GM13977 (cell line): ENCODE measurements at regions of chr2 and their contacts with region 1.

Region 1: GRCh38 chr2:13006829-13007717 is 290.3 kb downstream of the TRIB2 start:
- DNase-seq: peak; percentile 39
- CTCF ChIP-seq: peak; percentile 68

Region 2: DNA sequence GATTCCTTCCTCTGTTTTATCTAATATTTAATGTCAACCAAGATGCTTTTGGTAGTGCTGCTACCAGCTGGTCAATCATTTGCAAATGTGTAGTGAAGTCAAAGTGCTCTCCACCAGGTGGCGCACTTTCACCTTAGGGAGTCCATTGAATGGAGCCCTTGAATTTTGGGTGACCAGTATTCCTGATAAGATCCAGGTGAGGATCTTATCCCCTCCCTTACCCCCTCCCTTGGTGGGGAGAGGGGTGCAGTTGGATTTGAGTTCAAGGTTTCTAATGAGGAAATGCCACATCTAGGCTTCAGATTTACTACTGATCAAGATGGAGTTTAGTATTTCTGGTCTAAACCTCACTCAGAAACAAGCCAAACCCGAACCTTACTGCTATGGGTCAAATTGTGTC is 1529.1 kb before region 1 on chr2:
- in situ Hi-C with region 1: loop called (anchors 25 kb)
- DNase-seq: peak; percentile 72
- CTCF ChIP-seq: peak; percentile 86

Region 3: GRCh38 chr2:11688222-11689069 is 1318.6 kb before region 1 on chr2:
- in situ Hi-C with region 1: loop called (anchors 25 kb)
- DNase-seq: peak; percentile 83
- CTCF ChIP-seq: peak; percentile 81

Region 4: DNA sequence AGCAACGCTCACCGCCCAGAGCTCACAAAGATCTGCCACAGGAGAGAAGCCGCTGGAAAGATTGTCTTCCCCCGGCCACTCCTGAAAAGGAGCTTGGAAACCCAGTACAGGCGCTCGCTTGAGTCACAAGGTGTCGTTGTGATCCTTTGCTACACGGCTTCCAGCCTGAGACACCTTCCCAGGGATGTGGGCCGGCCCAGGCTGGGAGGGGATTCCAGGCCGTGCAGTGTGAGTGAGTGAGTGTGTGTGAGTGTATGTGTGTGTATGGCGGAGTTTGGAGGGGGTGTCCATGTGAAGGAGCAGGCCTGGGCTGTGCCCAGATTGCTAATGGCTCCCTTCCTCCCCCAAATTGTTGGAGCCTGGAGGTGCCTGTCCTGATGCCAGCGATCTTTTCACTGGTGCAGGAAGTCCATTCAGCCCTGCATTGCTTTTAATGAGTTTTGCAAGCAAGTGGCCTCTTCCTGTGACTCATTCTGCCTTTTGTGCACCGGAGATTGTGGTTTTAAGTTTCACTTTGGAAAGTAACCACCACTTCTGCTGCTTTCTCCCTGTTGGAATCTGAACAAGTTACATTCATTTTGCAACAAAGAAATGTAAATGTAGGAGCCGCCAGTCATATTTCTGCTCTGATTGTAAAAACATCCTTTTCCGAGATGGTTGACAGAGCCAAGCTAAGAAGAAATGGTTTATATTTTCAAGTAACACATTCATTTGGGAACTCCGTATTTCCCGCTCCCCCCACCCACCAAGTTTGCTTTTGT is 1176.9 kb before region 1 on chr2:
- in situ Hi-C with region 1: loop called (anchors 25 kb)
- DNase-seq: peak; percentile 74
- CTCF ChIP-seq: peak; percentile 19

Region 5: DNA sequence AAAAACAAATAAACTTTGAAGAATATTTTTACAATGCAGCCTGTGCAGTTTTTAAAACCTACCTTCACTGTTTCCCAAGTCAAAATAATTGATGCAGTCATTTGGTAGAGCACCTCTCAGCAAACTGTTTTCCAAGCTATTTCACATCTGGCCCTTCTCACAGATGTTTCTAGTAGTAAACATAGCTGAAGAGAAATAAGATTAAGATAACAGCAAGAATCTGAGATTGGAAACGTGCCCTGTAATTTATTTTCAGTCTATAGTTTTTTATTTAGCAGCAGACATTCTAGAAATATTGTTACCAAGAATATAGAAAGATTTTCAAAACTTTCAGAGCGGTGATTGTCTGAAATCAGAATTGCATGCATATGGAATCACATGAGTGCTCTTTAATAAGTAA is 149.8 kb after region 1 on chr2:
- in situ Hi-C with region 1: no loop called
- DNase-seq: no peak
- CTCF ChIP-seq: no peak